ENCODE measurements at regions of chr7 and their contacts with region 1.

Region 1: GRCh38 chr7:37201003-37201875 is 247.4 kb downstream of the ELMO1 start:
- DNase-seq: peak; percentile 14
- H3K4me3 ChIP-seq: no peak overlapping the region
- CTCF ChIP-seq: peak; percentile 81

Region 2: GRCh38 chr7:36487756-36488336 is 713.4 kb before region 1 on chr7:
- CTCF ChIA-PET with region 1: interaction called, 20 read pairs
- POLR2A ChIA-PET with region 1: no interaction called
- DNase-seq: no peak
- H3K4me3 ChIP-seq: no peak overlapping the region
- CTCF ChIP-seq: peak; percentile 64

Region 3: GRCh38 chr7:36986429-36987362 is 214.5 kb before region 1 on chr7:
- CTCF ChIA-PET with region 1: interaction called, 40 read pairs
- POLR2A ChIA-PET with region 1: no interaction called
- DNase-seq: no peak
- H3K4me3 ChIP-seq: no peak overlapping the region
- CTCF ChIP-seq: peak; percentile 93

Region 4: GRCh38 chr7:36994456-36995112 is 206.7 kb before region 1 on chr7:
- CTCF ChIA-PET with region 1: interaction called, 10 read pairs
- POLR2A ChIA-PET with region 1: no interaction called
- DNase-seq: no peak
- H3K4me3 ChIP-seq: no peak overlapping the region
- CTCF ChIP-seq: no peak

Region 5: DNA sequence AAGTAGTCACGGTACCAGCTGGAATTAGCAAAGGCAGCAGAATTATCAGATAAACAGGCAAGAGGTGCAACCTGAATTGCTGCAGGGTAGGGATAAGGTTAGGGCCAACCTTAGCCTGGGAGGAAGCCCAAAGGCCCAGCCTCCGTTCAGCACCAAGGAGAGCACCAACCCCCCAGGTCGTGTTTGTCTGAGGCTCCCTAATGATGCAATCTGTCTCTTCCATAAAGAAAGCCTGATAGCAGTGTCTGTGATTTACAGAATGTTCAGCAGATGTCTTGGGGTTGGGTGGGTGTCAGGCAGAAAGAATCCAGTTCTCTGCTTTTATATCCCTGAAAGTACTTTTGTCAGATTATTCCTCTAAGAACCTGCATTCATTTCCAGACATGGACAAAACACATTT is 148.5 kb before region 1 on chr7:
- CTCF ChIA-PET with region 1: no interaction called
- POLR2A ChIA-PET with region 1: no interaction called
- DNase-seq: no peak
- H3K4me3 ChIP-seq: no peak overlapping the region
- CTCF ChIP-seq: no peak